GM23248 (cell line): ENCODE measurements at regions of chr18 and their contacts with region 1.

Region 1: DNA sequence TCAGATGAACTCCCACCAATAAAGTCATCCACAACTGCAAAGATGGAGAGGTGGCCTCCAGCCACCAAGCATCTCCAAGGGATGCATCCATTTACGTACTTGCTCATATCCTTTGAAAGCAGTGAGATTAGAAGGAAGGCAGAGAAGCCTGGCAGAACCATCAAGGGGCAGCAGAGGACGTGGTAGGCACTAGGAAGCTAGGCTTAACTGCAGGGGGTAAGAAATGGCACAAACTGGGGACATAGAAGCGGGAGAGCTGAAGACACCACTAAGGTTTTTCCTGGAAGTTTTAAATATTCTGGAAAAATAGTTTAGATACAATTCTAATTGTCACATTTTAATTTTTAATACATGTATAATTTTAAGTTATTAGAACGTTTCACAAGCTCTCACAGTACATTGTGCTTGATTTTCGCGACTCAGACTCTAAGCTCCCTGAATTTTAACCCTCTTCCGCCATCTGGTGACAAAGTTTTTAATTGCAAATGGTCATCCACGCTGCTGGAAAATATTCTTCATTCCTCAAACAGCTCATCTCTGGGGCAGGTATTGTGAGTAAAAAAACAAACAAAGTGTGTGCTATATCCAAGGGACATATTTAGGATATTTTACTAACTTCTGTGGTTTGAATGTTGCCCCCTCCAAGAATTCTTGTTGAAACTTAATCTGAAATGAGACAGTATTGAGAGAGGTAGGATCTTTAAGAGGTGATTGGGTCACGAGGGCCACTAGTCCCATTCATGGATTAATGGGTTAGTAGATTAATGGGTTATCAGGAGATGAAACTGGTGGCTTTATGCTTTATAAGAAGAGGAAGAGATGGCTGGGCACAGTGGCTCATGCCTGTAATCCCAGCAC is 1.6 kb upstream of the PSTPIP2 start:
- DNase-seq: peak; percentile 81
- H3K4me3 ChIP-seq: no peak overlapping the region
- H3K27ac ChIP-seq: no peak overlapping the region
- H3K4me1 ChIP-seq: 0 out of 2 replicates have a peak, but pooled peaks cover 3% of the 10 kb centered on the region
- H3K27me3 ChIP-seq: no peaks in the 10 kb centered on the region

Region 2: GRCh38 chr18:44973282-44973681 is 1100.4 kb before region 1 on chr18:
- in situ Hi-C with region 1: no loop called
- DNase-seq: no peak
- H3K4me3 ChIP-seq: no peak overlapping the region
- H3K27ac ChIP-seq: no peak overlapping the region
- H3K4me1 ChIP-seq: no peaks in the 10 kb centered on the region
- H3K27me3 ChIP-seq: no peaks in the 10 kb centered on the region

Region 3: GRCh38 chr18:45282101-45282812 is 791.4 kb before region 1 on chr18:
- in situ Hi-C with region 1: no loop called
- DNase-seq: peak; percentile 27
- H3K4me3 ChIP-seq: no peak overlapping the region
- H3K27ac ChIP-seq: no peak overlapping the region
- H3K4me1 ChIP-seq: no peaks in the 10 kb centered on the region
- H3K27me3 ChIP-seq: no peaks in the 10 kb centered on the region

Region 4: GRCh38 chr18:45670281-45670962 is 403.3 kb before region 1 on chr18:
- in situ Hi-C with region 1: loop called (anchors 10 kb)
- DNase-seq: peak; percentile 85
- H3K4me3 ChIP-seq: peak overlapping the region; percentile 20; the same call in 1 of the 2 replicates
- H3K27ac ChIP-seq: peak overlapping the region; percentile 65
- H3K4me1 ChIP-seq: peaks cover 28% of the 10 kb centered on the region
- H3K27me3 ChIP-seq: no peaks in the 10 kb centered on the region